ENCODE measurements at regions of chr4 and their contacts with region 1.

Region 1: GRCh38 chr4:1549638-1550035 is 134.5 kb downstream of the FAM53A start:
- DNase-seq: no peak
- ATAC-seq: no peak
- H3K4me3 Mint-ChIP-seq: no peak overlapping the region
- H3K27ac Mint-ChIP-seq: no peak overlapping the region
- H3K4me1 Mint-ChIP-seq: peaks cover 8% of the 10 kb centered on the region
- H3K27me3 Mint-ChIP-seq: peaks cover 2% of the 10 kb centered on the region

Region 2: GRCh38 chr4:1628892-1629698 is 79.5 kb after region 1 on chr4:
- CTCF ChIA-PET with region 1: interaction called, 10 read pairs
- POLR2A ChIA-PET with region 1: no interaction called
- intact Hi-C with region 1: no loop called
- DNase-seq: peak; percentile 82
- ATAC-seq: peak; percentile 90
- H3K4me3 Mint-ChIP-seq: no peak overlapping the region
- H3K27ac Mint-ChIP-seq: no peak overlapping the region
- H3K4me1 Mint-ChIP-seq: no peaks in the 10 kb centered on the region
- H3K27me3 Mint-ChIP-seq: no peaks in the 10 kb centered on the region